ENCODE measurements at regions of chr3 and their contacts with region 1.

Region 1: GRCh38 chr3:195850857-195851543 is 39.3 kb upstream of the MUC4 start:
- DNase-seq: peak; percentile 94
- ATAC-seq: peak; percentile 95
- H3K4me3 Mint-ChIP-seq: no peak overlapping the region
- H3K27ac Mint-ChIP-seq: no peak overlapping the region
- H3K4me1 Mint-ChIP-seq: peaks cover 11% of the 10 kb centered on the region
- H3K27me3 Mint-ChIP-seq: peaks cover 4% of the 10 kb centered on the region

Region 2: DNA sequence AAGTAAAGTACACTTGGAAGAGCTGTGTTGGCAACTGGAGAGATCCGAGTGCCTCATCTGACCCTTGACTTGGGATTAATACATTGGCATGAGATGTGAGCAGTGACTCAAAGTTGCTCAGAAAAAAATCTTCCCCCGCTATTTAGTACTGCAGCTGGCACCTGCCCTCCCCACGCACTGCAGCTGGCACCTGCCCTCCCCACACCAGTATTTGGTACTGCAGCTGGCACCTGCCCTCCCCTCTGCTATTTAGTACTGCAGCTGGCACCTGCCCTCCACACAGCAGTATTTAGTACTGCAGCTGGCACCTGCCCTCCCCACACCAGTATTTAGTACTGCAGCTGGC is 134.2 kb before region 1 on chr3:
- CTCF ChIA-PET with region 1: interaction called, 21 read pairs
- POLR2A ChIA-PET with region 1: no interaction called
- DNase-seq: no peak
- ATAC-seq: no peak
- H3K4me3 Mint-ChIP-seq: no peak overlapping the region
- H3K27ac Mint-ChIP-seq: no peak overlapping the region
- H3K4me1 Mint-ChIP-seq: peaks cover 5% of the 10 kb centered on the region
- H3K27me3 Mint-ChIP-seq: peaks cover 13% of the 10 kb centered on the region

Region 3: DNA sequence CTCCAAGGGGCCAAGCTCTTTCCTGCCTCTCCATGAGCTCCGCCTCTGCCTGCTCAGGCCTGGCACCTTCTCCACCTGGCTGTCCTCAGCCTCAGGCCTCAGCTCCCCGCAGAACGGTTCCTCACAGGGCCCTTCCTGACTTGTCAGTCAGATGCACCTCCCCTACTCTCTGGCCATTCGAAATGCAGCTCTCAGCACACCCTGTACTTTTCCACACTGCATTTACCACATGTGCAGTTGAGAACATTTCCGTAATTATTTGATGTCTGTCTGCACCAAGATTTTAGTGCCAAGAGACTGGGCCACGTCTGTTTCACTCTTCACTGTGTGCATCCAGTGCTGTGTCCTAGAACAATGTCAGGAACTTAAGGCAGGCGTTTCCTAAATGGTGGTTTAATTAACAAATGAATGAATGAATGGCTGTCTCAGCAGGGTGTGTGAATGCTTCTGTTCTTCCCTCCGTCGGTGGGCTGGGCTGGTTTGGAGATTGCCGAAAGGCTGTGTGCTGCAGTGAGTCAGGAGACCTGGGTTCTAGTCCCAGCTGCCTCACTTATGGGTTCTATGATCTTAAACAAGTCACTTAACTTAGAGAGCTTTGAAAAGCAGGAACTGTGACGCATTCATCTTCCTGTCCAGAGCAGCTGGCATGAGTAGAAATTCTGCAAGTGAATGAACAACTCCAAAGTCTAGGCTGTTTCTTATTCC is 44.6 kb before region 1 on chr3:
- CTCF ChIA-PET with region 1: interaction called, 10 read pairs
- POLR2A ChIA-PET with region 1: no interaction called
- DNase-seq: no peak
- ATAC-seq: no peak
- H3K4me3 Mint-ChIP-seq: no peak overlapping the region
- H3K27ac Mint-ChIP-seq: peak overlapping the region; percentile 86
- H3K4me1 Mint-ChIP-seq: peaks cover 66% of the 10 kb centered on the region
- H3K27me3 Mint-ChIP-seq: peaks cover 5% of the 10 kb centered on the region

Region 4: DNA sequence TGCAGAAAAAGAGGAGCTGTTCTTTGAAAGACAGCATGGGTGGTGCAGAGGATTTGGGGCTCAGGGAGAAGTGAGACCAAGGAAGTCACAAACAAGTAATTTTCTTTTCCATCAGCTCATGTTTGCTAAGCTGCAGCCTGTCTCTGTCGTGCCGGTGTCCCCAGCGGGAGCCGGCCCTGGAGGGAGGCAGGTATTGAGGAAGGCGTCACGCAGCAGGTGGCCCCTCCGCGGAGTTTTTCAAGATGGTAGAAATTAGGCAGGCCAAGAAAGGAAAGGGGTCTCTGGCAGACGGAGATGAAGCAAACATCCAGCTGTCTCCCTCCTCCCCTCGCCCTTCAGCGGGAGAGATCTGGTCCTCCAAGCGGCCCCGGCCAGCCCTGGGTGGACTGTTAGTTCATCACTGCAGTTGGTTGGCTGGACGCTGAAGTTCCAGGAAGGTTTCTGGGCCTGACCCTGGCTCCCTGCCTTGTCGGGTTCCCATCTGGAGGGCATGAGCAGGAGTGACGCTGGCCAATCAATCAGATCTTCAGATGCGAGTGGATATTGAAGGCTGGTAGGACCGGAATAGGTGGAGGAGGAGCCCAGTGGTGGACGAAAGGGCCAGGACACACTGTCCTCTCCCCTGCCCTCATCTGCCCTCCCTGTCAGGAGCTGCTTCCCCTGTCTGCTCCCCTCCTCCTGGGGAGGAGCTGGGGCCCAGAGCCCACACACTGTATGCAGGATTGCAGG is 11.6 kb before region 1 on chr3:
- CTCF ChIA-PET with region 1: interaction called, 30 read pairs
- POLR2A ChIA-PET with region 1: no interaction called
- DNase-seq: no peak
- ATAC-seq: no peak
- H3K4me3 Mint-ChIP-seq: no peak overlapping the region
- H3K27ac Mint-ChIP-seq: no peak overlapping the region
- H3K4me1 Mint-ChIP-seq: no peaks in the 10 kb centered on the region
- H3K27me3 Mint-ChIP-seq: peaks cover 12% of the 10 kb centered on the region

Region 5: GRCh38 chr3:195863121-195864006 is 12.4 kb after region 1 on chr3:
- CTCF ChIA-PET with region 1: interaction called, 15 read pairs
- POLR2A ChIA-PET with region 1: no interaction called
- DNase-seq: peak; percentile 70
- ATAC-seq: peak; percentile 72
- H3K4me3 Mint-ChIP-seq: no peak overlapping the region
- H3K27ac Mint-ChIP-seq: no peak overlapping the region
- H3K4me1 Mint-ChIP-seq: peaks cover 4% of the 10 kb centered on the region
- H3K27me3 Mint-ChIP-seq: no peaks in the 10 kb centered on the region

Region 6: GRCh38 chr3:195894780-195895607 is 44.0 kb after region 1 on chr3:
- CTCF ChIA-PET with region 1: interaction called, 22 read pairs
- POLR2A ChIA-PET with region 1: no interaction called
- DNase-seq: peak; percentile 78
- ATAC-seq: peak; percentile 75
- H3K4me3 Mint-ChIP-seq: peak overlapping the region; percentile 87
- H3K27ac Mint-ChIP-seq: peak overlapping the region; percentile 93
- H3K4me1 Mint-ChIP-seq: peaks cover 51% of the 10 kb centered on the region
- H3K27me3 Mint-ChIP-seq: no peaks in the 10 kb centered on the region

Region 7: DNA sequence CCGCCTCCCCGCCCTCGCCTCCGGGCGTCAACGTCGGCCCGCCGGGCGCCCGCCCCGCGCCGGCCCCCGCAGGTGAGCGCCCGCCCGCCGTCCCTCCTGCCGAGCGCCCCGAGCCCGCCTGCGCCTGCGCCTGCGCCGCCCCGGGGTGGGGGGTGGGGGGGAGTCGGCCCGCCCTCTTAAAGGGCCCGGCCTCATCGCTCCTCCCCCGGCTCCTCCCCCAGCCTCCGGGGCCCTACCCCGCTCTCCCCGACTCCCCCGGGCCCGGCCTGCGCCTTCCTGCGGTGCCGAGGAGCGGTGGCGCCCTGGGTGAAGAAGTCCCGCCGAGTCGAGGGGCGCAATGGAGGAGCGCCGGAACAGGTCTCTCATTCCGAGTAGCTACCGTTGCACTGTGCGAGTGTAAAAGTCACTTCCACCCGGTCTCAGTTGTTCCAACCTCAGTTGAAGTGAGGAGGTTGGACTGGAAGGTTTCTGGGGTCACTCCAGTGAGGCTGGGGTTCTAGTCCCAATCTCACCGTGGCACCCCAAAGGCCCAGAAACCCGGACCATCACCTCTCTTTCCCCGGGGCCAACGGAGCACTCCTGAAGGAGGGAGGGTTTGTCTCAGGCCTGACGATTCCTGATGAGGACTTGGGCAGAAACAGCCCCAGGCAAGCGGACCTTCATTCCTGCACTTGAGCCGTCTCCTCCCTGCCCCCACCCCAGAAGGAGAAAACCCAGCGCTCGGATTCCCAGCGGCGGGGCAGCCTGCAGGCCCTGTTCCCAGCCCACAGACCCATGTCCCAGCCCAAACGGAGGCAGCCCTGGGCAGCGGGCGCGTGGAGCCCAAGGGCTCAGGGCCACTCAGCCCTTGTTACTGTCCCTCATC is 58.9 kb after region 1 on chr3:
- CTCF ChIA-PET with region 1: interaction called, 14 read pairs
- POLR2A ChIA-PET with region 1: interaction called, 4 read pairs
- DNase-seq: peak; percentile 90
- ATAC-seq: peak; percentile 64
- H3K4me3 Mint-ChIP-seq: peak overlapping the region; percentile 73
- H3K27ac Mint-ChIP-seq: peak overlapping the region; percentile 80
- H3K4me1 Mint-ChIP-seq: peaks cover 41% of the 10 kb centered on the region
- H3K27me3 Mint-ChIP-seq: no peaks in the 10 kb centered on the region